Activated CD8-positive, alpha-beta T cell treated with anti-CD3 and anti-CD28 coated beads for 36 hours (primary cell): ENCODE measurements at regions of chr10 and their contacts with region 1.

Region 1: GRCh38 chr10:86688398-86688921 is 20.1 kb downstream of the LDB3 start:
- DNase-seq: peak; percentile 67
- ATAC-seq: peak; percentile 97
- H3K4me3 Mint-ChIP-seq: no peak overlapping the region
- H3K27ac Mint-ChIP-seq: no peak overlapping the region
- H3K4me1 Mint-ChIP-seq: peaks cover 4% of the 10 kb centered on the region
- H3K27me3 Mint-ChIP-seq: no peaks in the 10 kb centered on the region
- CTCF ChIP-seq: peak; percentile 79

Region 2: DNA sequence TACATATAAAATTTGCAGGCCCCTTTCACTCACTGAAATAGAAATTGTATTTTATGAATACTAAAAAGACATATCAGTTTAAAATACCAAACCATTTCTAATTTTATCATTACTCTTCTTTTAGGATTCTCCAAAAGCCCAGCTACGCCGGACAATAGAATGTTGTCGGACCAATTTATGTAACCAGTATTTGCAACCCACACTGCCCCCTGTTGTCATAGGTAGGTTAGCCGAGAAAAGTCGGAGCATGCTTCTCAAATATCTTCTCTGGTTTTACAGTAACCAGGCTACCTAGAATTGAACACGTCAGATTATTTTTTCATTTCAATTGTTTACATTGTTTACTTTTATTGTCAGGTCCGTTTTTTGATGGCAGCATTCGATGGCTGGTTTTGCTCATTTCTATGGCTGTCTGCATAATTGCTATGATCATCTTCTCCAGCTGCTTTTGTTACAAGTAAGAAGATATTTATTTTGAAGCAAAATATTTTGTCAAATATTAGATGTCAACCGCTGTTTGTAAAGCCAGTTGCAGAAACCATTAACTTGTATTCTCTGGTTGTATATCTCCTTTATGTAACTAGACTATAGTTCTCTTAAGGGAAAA is 211.3 kb after region 1 on chr10:
- CTCF ChIA-PET with region 1: interaction called, 36 read pairs
- POLR2A ChIA-PET with region 1: no interaction called
- intact Hi-C with region 1: loop called (anchors 2 kb)
- DNase-seq: peak; percentile 66
- ATAC-seq: peak; percentile 65
- H3K4me3 Mint-ChIP-seq: no peak overlapping the region
- H3K27ac Mint-ChIP-seq: no peak overlapping the region
- H3K4me1 Mint-ChIP-seq: no peaks in the 10 kb centered on the region
- H3K27me3 Mint-ChIP-seq: no peaks in the 10 kb centered on the region
- CTCF ChIP-seq: peak; percentile 74